Activated B cell treated with CpG ODN at 0.5 μM for 24 hours (primary cell): ENCODE measurements at regions of chr12 and their contacts with region 1.

Region 1: GRCh38 chr12:16568873-16569272 is 37.1 kb downstream of the LMO3 start:
- DNase-seq: no peak
- ATAC-seq: no peak
- H3K4me3 Mint-ChIP-seq: no peak overlapping the region
- H3K27ac Mint-ChIP-seq: no peak overlapping the region
- H3K4me1 Mint-ChIP-seq: no peaks in the 10 kb centered on the region
- H3K27me3 Mint-ChIP-seq: no peaks in the 10 kb centered on the region
- CTCF ChIP-seq: no peak

Region 2: DNA sequence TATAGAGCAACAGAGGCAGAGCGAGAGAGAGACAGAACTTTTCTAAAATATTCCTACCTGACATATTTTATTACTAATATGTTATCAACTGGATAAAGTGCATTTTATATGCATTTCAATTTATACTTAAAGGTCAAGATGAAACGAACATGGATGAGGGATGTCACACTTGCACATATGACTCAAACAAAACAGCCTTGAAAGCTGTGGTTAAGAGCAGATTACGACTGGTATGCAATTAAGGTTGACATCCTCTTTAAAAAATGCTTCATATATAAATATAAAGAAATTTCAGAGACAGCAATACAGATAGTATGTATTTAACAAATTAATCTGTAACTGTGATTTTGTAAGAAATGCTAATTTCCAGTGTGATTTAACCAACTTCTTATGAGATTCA is 15.4 kb before region 1 on chr12:
- CTCF ChIA-PET with region 1: no interaction called
- POLR2A ChIA-PET with region 1: no interaction called
- intact Hi-C with region 1: loop called (anchors 2 kb)
- DNase-seq: no peak
- ATAC-seq: no peak
- H3K4me3 Mint-ChIP-seq: no peak overlapping the region
- H3K27ac Mint-ChIP-seq: no peak overlapping the region
- H3K4me1 Mint-ChIP-seq: no peaks in the 10 kb centered on the region
- H3K27me3 Mint-ChIP-seq: no peaks in the 10 kb centered on the region
- CTCF ChIP-seq: no peak